Natural killer cell (primary cell): ENCODE measurements at regions of chr12 and their contacts with region 1.

Region 1: GRCh38 chr12:55817346-55818139 is at the starts of genes ORMDL2 and SARNP:
- DNase-seq: peak; percentile 88 to 99
- ATAC-seq: peak; percentile 91 to 97 (median 92)
- H3K4me3 ChIP-seq: peak within 1 kb of the TSS; percentile 85
- H3K4me3 Mint-ChIP-seq: no peak within 1 kb of the TSS
- H3K27ac ChIP-seq: peak within 1 kb of the TSS; percentile 78
- H3K27ac Mint-ChIP-seq: no peak within 1 kb of the TSS
- H3K4me1 ChIP-seq: peaks cover 22% of the 10 kb centered on the region
- H3K4me1 Mint-ChIP-seq: peaks cover 22 to 29% of the 10 kb centered on the region in 2 donors
- H3K27me3 ChIP-seq: no peaks in the 10 kb centered on the region
- H3K27me3 Mint-ChIP-seq: no peaks in the 10 kb centered on the region
- CTCF ChIP-seq: no peak
- total RNA-seq, gene ORMDL2: 21.3 to 36.3 (median 23.1) TPM
- total RNA-seq, gene SARNP: 50.5 to 57.0 (median 51.2) TPM

Region 2: GRCh38 chr12:55681142-55682077 is 136.1 kb before region 1 on chr12:
- intact Hi-C with region 1: no loop called
- DNase-seq: peak in 1 of 2 donors; percentile 13
- ATAC-seq: peak in 1 of 3 donors; percentile 48
- H3K4me3 ChIP-seq: no peak overlapping the region
- H3K4me3 Mint-ChIP-seq: no peak overlapping the region
- H3K27ac ChIP-seq: no peak overlapping the region
- H3K27ac Mint-ChIP-seq: no peak overlapping the region
- H3K4me1 ChIP-seq: peaks cover 14% of the 10 kb centered on the region
- H3K4me1 Mint-ChIP-seq: peaks cover 0 to 11% of the 10 kb centered on the region in 2 donors
- H3K27me3 ChIP-seq: peaks cover 3% of the 10 kb centered on the region
- H3K27me3 Mint-ChIP-seq: peaks cover 21% of the 10 kb centered on the region in 2 donors
- CTCF ChIP-seq: no peak

Region 3: GRCh38 chr12:55780685-55781084 is 36.9 kb before region 1 on chr12:
- intact Hi-C with region 1: no loop called
- DNase-seq: peak in 1 of 2 donors; percentile 13
- ATAC-seq: no peak
- H3K4me3 ChIP-seq: no peak overlapping the region
- H3K4me3 Mint-ChIP-seq: no peak overlapping the region
- H3K27ac ChIP-seq: no peak overlapping the region
- H3K27ac Mint-ChIP-seq: no peak overlapping the region
- H3K4me1 ChIP-seq: peaks cover 3% of the 10 kb centered on the region
- H3K4me1 Mint-ChIP-seq: no peaks in the 10 kb centered on the region
- H3K27me3 ChIP-seq: no peaks in the 10 kb centered on the region
- H3K27me3 Mint-ChIP-seq: no peaks in the 10 kb centered on the region
- CTCF ChIP-seq: no peak

Region 4: GRCh38 chr12:55829967-55830600 is 12.5 kb after region 1 on chr12:
- intact Hi-C with region 1: loop called (anchors 1 kb)
- DNase-seq: peak; percentile 28 to 59
- ATAC-seq: peak in 1 of 3 donors; percentile 11
- H3K4me3 ChIP-seq: peak overlapping the region; percentile 68
- H3K4me3 Mint-ChIP-seq: peak overlapping the region; percentile 99
- H3K27ac ChIP-seq: peak overlapping the region; percentile 61
- H3K27ac Mint-ChIP-seq: peak overlapping the region; percentile 91 to 95
- H3K4me1 ChIP-seq: peaks cover 49% of the 10 kb centered on the region
- H3K4me1 Mint-ChIP-seq: peaks cover 44 to 56% of the 10 kb centered on the region in 2 donors
- H3K27me3 ChIP-seq: no peaks in the 10 kb centered on the region
- H3K27me3 Mint-ChIP-seq: no peaks in the 10 kb centered on the region
- CTCF ChIP-seq: no peak

Region 5: DNA sequence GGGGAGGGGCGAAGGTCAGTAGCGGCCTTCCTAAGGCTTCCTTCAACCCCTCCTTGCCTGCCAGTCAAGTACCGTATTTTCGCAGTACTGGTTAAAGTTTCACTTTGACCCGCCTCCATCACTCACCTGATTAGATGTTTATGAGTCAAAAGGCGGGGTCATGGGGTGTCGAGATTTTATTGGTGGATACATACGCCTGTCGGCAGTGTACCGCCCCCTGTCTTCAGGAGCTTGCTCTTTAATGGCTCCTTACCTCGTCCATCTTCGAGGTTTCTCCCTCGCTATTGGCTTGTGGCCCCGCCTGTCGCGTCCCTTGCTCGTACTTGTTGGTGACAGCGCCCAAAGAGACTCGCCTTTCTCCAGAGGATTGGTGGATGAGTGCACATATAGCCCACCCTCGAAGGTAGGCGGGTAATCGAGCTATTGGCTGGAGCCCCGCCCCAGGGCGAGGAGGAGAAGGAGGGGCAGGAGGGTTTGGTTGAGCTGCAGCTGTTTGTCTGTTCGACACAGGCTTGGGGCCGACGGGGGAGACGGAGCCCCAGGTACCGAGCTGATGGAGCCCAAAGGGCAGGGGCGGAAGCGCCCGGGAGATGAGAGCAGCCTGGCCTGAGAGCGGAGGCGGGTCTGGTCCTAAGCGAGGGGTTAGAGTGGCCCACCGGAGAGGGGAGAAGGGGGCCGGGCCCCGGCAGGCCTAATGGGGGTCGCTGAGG is 156.2 kb after region 1 on chr12 and contains the start of gene RAB5B:
- intact Hi-C with region 1: loop called (anchors 1 kb)
- DNase-seq: peak; percentile 93 to 99
- ATAC-seq: peak; percentile 85 to 95 (median 85)
- H3K4me3 ChIP-seq: peak within 1 kb of the TSS; percentile 83
- H3K4me3 Mint-ChIP-seq: no peak within 1 kb of the TSS
- H3K27ac ChIP-seq: peak within 1 kb of the TSS; percentile 84
- H3K27ac Mint-ChIP-seq: no peak within 1 kb of the TSS
- H3K4me1 ChIP-seq: peaks cover 14% of the 10 kb centered on the region
- H3K4me1 Mint-ChIP-seq: peaks cover 18 to 24% of the 10 kb centered on the region in 2 donors
- H3K27me3 ChIP-seq: no peaks in the 10 kb centered on the region
- H3K27me3 Mint-ChIP-seq: no peaks in the 10 kb centered on the region
- CTCF ChIP-seq: no peak
- total RNA-seq, gene RAB5B: 69.4 to 80.0 (median 78.2) TPM